Gastrocnemius medialis (tissue), 4 donors: ENCODE measurements at regions of chr9 and their contacts with region 1.

Region 1: DNA sequence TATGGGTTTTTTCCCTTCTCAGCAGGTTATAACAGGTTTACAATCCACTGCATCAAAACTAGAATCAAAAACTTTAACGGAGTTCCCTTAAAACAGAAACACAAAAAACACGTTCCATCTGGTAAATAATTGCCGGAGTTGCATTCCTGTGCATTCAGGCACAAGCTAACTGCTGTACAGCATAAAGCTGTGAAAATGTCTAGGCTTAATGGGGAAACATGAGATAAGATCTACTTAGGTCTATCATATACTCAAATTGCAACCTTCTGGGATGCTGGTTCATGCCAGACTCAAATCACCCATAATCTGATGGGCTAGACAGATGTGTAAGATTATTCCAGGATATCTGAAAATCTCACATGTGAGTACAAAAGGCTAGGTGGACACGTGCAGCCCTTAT is 265.3 kb downstream of the DOCK8 start:
- DNase-seq: no peak
- ATAC-seq: no peak
- H3K4me3 ChIP-seq: no peak overlapping the region
- H3K27ac ChIP-seq: no peak overlapping the region
- H3K4me1 ChIP-seq: no peaks in the 10 kb centered on the region
- H3K27me3 ChIP-seq: no peaks in the 10 kb centered on the region
- CTCF ChIP-seq: no peak
- POLR2A ChIP-seq: no peak

Region 2: DNA sequence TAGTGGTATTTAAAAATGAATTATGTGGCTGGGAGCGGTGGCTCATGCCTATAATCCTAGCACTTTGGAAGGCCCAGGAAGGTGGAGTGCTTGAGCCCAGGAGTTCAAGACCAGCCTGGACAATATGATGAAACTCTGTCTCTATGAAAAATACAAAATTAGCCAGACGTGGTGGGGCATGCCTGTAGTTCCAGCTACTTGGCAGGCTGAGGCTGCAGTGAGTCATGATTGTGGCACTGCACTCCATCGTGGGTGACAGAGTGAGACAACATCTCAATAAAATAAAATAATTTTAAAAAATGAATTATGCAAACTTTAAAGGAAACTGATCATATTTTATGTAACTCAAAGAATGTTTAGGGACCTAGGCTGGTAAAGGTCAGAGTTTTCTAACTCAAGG is 50.7 kb after region 1 on chr9:
- in situ Hi-C with region 1: no loop called
- intact Hi-C with region 1: no loop called
- DNase-seq: peak; percentile 8 to 41
- ATAC-seq: peak; percentile 60 to 68
- H3K4me3 ChIP-seq: no peak overlapping the region
- H3K27ac ChIP-seq: no peak overlapping the region
- H3K4me1 ChIP-seq: peaks cover 3 to 21% of the 10 kb centered on the region in 2 donors
- H3K27me3 ChIP-seq: no peaks in the 10 kb centered on the region
- CTCF ChIP-seq: no peak
- POLR2A ChIP-seq: no peak

Region 3: DNA sequence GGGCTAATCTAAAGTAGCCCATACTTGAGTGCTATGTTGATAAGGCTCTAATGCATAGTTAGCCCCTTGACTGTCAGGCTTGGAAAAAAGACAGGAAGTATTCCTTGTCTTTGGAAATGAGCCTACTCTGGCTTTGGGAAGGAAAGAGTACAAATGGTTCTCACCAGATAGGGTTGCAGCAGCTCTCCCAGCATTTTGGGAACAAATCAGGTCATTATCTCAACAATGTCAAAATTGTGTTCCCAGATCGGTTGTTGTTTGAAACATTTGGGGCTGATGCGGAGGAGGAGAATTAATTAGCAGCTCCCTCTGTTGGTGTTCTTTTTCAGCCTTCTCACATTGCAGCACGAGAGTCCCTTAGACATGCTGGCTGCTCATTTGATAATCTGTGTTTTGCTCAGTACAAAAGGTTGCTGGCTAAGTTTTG is 66.8 kb after region 1 on chr9:
- in situ Hi-C with region 1: no loop called
- intact Hi-C with region 1: loop called (anchors 2 kb)
- DNase-seq: peak in 1 of 2 donors; percentile 8
- ATAC-seq: peak; percentile 77 to 84
- H3K4me3 ChIP-seq: peak overlapping the region in 2 of 4 donors; percentile 8 to 23
- H3K27ac ChIP-seq: peak overlapping the region in 3 of 4 donors; percentile 16 to 57 (median 23)
- H3K4me1 ChIP-seq: peaks cover 11 to 15% of the 10 kb centered on the region in 2 donors
- H3K27me3 ChIP-seq: no peaks in the 10 kb centered on the region
- CTCF ChIP-seq: peak in 2 of 5 experiments; percentile 37 to 45
- POLR2A ChIP-seq: no peak